Activated CD4-positive, alpha-beta memory T cell treated with anti-CD3 and anti-CD28 coated beads for 36 hours (primary cell): ENCODE measurements at regions of chr7 and their contacts with region 1.

Region 1: GRCh38 chr7:105808703-105809590 is 67.5 kb downstream of the ATXN7L1 start:
- DNase-seq: peak; percentile 96
- H3K4me3 Mint-ChIP-seq: peak overlapping the region; percentile 21
- H3K27ac Mint-ChIP-seq: peak overlapping the region; percentile 67
- H3K4me1 Mint-ChIP-seq: peaks cover 57% of the 10 kb centered on the region
- H3K27me3 Mint-ChIP-seq: no peaks in the 10 kb centered on the region

Region 2: DNA sequence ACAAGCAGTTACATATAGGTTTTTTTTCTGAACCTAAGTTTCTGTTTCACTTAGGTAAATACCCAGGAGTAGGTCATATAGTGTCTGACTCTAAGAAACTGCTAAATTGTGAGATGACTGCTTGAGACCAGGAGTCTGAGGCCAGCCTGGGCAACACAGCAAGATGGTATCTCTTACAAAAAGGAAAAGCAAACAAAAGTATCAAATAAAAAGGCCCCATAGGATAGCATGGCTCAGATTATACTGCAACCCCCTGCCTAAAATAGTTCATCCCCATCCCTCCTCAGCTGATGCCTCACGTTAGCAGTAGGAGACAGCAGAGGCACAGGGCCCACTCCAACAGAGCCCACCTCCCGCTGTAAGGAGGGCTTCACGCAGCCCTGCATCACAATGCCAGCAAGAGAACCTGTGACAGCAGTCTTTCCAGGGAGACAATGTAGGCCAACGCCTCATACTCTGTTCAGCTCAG is 510.5 kb before region 1 on chr7:
- CTCF ChIA-PET with region 1: no interaction called
- POLR2A ChIA-PET with region 1: no interaction called
- intact Hi-C with region 1: loop called (anchors 5 kb)
- DNase-seq: peak; percentile 69
- H3K4me3 Mint-ChIP-seq: peak overlapping the region; percentile 47
- H3K27ac Mint-ChIP-seq: peak overlapping the region; percentile 93
- H3K4me1 Mint-ChIP-seq: peaks cover 59% of the 10 kb centered on the region
- H3K27me3 Mint-ChIP-seq: no peaks in the 10 kb centered on the region

Region 3: GRCh38 chr7:105512415-105512814 is 296.5 kb before region 1 on chr7:
- CTCF ChIA-PET with region 1: no interaction called
- POLR2A ChIA-PET with region 1: no interaction called
- intact Hi-C with region 1: no loop called
- DNase-seq: no peak
- H3K4me3 Mint-ChIP-seq: no peak overlapping the region
- H3K27ac Mint-ChIP-seq: peak overlapping the region; percentile 9
- H3K4me1 Mint-ChIP-seq: peaks cover 23% of the 10 kb centered on the region
- H3K27me3 Mint-ChIP-seq: no peaks in the 10 kb centered on the region

Region 4: DNA sequence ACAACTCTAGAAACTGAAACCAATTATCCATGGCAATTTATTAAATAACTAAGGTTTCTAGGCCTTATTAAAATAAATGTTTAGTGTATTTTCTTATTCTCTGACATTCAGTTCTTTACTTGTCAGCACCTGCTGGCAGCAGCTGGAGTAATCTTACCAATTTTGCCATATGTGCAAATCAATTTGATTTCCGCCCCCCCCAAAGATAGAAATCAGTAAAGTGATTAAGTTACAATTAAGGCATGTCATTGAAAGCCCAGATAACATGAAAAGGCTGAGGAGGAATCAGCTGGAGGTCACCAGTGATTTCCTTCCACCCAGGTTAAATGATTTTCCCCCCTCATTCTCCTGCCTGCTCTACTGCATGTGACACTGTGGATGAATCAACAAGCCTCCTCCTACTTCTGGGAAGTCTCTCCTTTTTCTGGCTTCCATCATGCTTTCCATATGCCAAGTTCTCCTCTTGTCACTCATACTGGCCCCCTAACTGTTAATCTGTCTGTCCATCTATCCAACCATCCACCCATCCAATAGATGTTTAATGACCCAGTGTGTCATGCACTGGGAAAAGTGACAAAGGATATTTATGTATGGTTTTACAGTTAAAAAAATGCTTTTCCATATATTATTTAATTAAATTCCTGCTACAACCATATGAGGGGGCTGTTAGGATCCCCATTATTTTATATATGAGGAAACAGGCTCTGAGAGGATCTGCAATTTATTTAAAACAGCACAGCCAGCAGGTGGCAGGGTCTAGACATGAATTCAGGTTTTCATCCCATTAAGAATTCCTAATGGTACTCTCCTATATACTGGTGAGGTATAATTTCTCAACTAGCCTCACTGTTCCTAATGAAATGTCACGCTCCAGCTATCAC is 49.0 kb before region 1 on chr7:
- CTCF ChIA-PET with region 1: interaction called, 11 read pairs
- POLR2A ChIA-PET with region 1: no interaction called
- intact Hi-C with region 1: no loop called
- DNase-seq: no peak
- H3K4me3 Mint-ChIP-seq: no peak overlapping the region
- H3K27ac Mint-ChIP-seq: no peak overlapping the region
- H3K4me1 Mint-ChIP-seq: peaks cover 27% of the 10 kb centered on the region
- H3K27me3 Mint-ChIP-seq: no peaks in the 10 kb centered on the region

Region 5: DNA sequence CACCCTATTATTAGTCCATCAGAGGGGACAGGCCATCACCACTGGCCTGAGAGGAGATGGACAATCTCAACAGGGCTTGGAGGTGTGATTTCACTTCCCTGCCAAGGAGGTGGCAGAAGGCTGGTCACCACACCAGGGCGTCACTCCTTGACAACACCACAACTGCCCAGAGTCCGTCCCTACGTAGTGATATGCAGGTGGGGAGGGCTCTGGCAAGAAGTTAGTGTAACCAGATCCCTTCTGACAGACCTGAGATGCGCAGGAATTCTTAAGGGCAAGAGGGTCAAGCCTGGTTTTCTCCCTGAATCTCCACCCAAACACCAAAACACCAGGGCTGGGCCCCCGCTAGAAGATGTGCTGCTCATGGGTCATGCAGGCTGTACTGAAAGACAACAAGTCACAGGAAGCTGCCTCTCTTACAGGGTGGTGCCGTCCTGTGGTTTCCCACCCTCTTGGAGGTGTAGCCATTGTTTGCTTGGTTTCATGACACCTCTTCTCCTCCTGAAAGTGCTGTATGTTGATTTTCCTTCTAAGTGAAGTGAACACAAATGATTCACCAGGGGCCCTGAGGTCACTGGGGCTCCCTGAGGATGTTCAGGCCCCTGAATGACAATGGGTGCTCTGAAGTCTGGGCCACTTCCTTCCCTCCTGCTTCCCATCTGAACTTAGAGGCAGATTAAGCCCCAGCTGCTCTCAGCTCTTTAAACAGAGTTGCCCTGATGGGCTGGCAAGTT is 40.3 kb after region 1 on chr7:
- CTCF ChIA-PET with region 1: no interaction called
- POLR2A ChIA-PET with region 1: interaction called, 4 read pairs
- intact Hi-C with region 1: loop called (anchors 1 kb)
- DNase-seq: peak; percentile 87
- H3K4me3 Mint-ChIP-seq: peak overlapping the region; percentile 11
- H3K27ac Mint-ChIP-seq: peak overlapping the region; percentile 68
- H3K4me1 Mint-ChIP-seq: peaks cover 46% of the 10 kb centered on the region
- H3K27me3 Mint-ChIP-seq: no peaks in the 10 kb centered on the region

Region 6: DNA sequence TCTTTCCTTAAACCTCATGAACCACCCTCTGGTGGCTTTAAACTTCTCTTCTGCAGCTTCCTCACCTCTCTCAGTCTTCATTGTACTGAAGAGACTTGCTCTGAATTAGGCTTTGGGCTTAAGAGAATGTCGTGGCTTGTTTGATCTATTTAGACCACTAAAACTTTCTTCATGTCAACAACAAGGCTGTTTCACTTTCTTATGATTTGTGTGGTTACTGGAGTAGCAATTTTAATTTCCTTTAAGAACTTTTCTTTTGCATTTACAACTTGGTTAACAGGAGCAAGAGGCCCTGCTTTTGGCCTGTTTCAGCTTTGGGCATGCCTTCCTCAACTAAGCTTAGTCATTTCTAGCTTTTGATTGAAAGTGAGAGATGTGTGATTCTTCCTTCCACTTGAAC is 116.0 kb after region 1 on chr7:
- CTCF ChIA-PET with region 1: no interaction called
- POLR2A ChIA-PET with region 1: no interaction called
- intact Hi-C with region 1: loop called (anchors 1 kb)
- DNase-seq: peak; percentile 50
- H3K4me3 Mint-ChIP-seq: no peak overlapping the region
- H3K27ac Mint-ChIP-seq: peak overlapping the region; percentile 53
- H3K4me1 Mint-ChIP-seq: peaks cover 30% of the 10 kb centered on the region
- H3K27me3 Mint-ChIP-seq: peaks cover 2% of the 10 kb centered on the region

Region 7: GRCh38 chr7:106425017-106425719 is 616.2 kb after region 1 on chr7:
- CTCF ChIA-PET with region 1: no interaction called
- POLR2A ChIA-PET with region 1: no interaction called
- intact Hi-C with region 1: loop called (anchors 5 kb)
- DNase-seq: peak; percentile 91
- H3K4me3 Mint-ChIP-seq: peak overlapping the region; percentile 65
- H3K27ac Mint-ChIP-seq: peak overlapping the region; percentile 97
- H3K4me1 Mint-ChIP-seq: peaks cover 81% of the 10 kb centered on the region
- H3K27me3 Mint-ChIP-seq: no peaks in the 10 kb centered on the region